ENCODE measurements at regions of chr12 and their contacts with region 1.

Region 1: GRCh38 chr12:84502907-84503787 is 409.5 kb downstream of the SLC6A15 start:
- DNase-seq: peak; percentile 26
- H3K4me3 ChIP-seq: no peak overlapping the region
- CTCF ChIP-seq: peak; percentile 56

Region 2: DNA sequence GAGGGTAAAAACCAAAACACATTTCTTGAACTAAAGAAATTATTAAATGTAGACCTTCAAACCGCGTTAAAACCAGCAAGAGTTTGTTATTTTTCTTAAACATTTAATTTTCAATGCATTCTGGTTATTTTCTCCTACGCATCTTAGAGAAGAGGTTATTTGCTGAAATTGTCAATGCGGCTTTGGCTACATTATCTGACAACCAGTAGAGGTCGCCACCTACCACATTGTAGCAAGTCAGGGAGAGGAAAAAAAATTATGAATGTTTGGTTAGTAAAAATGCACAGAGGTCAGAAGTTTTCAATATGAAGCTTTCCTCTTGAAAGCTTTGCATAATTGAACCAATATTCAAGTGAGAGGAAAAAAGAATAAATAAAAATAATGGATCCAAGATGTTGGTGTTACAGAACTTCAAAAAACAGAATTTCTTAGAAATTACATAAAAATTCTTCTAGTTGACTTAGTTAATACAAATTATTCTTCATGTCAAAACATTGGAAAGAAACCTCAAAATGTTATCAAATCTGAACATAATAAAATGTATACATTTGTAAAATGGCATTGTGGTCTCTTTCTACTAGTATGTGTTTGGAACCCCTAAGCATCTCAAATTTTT is 1975.9 kb before region 1 on chr12:
- CTCF ChIA-PET with region 1: interaction called, 21 read pairs
- POLR2A ChIA-PET with region 1: no interaction called
- DNase-seq: peak; percentile 7
- H3K4me3 ChIP-seq: no peak overlapping the region
- CTCF ChIP-seq: peak; percentile 72

Region 3: DNA sequence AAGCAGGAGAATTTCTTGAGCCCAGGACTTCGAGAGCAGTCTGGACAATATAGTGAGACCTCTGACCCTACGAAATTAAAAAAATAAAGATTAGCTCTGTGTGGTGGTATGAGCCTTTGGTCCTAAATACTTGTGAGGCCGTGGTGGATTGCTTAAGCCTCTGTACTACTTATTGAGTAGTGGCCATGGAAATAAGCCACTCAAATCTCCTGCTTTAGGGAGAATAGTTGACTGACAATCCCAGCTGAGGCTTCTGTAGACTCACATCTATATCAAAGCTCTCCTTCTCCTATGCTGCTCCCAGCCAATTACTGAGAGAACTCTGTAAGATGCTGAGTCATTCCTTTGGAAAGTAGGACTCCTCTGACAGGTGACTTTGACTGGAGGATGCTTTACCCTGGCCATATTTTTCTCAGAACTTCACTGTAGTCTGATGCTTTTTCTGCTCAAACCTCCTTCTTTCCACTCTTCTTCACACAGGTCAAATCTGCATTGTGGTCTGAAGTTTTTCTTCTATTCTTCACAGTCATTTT is 10.7 kb before region 1 on chr12:
- CTCF ChIA-PET with region 1: interaction called, 10 read pairs
- POLR2A ChIA-PET with region 1: no interaction called
- DNase-seq: no peak
- H3K4me3 ChIP-seq: no peak overlapping the region
- CTCF ChIP-seq: no peak

Measured in AG04449 (cell line).